ENCODE measurements at regions of chr1 and their contacts with region 1.

Region 1: DNA sequence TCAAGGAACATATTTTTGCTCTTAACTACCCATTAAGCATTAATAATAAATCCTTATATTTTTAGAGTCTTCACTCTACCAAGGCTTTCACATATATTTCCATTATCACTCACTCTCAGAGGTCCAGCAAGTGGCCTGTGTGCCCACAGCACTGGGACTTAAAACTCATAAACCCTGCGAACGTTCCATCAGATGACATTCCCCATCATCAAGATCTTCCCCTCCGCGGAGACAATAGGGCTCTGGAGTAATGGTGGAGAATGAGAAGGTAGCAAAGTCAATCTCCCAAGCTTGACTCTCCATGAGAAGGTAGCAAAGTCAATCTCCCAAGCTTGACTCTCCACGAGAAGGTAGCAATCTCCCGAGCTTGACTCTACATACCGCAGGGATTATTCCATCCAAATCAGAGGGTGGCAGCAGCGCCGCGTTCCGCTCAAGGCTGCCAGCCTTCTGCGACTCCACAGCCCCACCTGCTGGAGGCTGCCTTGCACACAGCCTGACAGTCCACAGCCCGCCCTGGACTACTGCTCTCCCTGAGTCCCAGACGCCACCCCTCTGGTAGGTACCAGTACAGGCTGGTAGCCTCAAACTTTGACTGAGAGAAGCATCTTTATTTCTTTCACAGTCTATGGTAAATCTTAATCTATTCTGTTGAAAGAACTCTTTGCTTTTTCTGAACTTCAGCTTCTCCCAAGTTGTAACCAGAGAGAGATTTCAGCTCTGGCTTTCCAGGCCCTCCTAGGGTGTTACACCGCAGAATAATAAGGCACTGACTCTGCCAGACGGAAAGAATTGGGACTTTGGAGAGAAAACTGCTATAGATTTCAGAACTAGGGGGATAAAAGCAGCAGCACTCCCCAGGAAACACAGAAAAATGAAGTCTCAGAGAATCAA is 26.4 kb upstream of the CTTNBP2NL start:
- DNase-seq: peak; percentile 83
- H3K4me3 ChIP-seq: peak overlapping the region in 1 of 2 experiments; percentile 42; a peak in 1 of 4 replicates
- H3K27ac ChIP-seq: no peak overlapping the region
- H3K4me1 ChIP-seq: no peaks in the 10 kb centered on the region; a peak in 1 of 4 replicates
- H3K27me3 ChIP-seq: peaks cover 33% of the 10 kb centered on the region
- CTCF ChIP-seq: peak; percentile 94
- EP300 ChIP-seq: no peak
- RAD21 ChIP-seq: peak; percentile 90

Region 2: DNA sequence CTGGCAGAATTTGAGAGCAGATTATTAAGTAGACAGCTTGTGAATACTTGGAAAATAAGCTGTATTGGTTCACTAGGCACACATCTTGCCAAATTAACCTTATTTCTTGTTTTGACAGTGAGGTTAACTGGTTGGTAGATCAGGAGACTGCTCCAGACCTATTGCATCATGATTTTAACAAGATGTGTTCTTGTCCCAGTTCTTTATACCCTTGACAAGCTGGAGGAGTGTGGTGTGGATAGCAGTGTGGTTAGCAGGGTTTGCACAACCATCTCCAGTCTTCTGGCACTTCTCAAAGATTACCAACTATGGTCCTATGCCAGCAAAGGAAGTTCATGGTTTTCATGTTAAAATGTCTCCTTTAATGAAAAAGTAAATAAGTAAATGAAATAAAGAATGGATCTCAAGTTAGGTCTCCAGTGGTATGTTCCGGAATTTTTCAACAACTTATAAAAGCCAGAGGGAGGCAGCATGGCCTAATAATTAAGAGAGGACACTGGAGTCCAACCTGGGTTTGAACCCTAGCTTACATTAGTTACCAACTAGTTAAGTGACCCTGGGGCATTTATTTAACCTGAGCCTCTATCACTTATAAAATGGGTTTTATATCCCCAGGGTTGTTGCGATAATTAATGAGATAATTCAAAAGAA is 579.8 kb before region 1 on chr1:
- CTCF ChIA-PET with region 1: interaction called, 12 read pairs
- POLR2A ChIA-PET with region 1: no interaction called
- DNase-seq: no peak
- H3K4me3 ChIP-seq: no peak overlapping the region
- H3K27ac ChIP-seq: no peak overlapping the region
- H3K4me1 ChIP-seq: no peaks in the 10 kb centered on the region
- H3K27me3 ChIP-seq: peaks cover 27% of the 10 kb centered on the region; the same call in 1 of the 2 replicates
- CTCF ChIP-seq: 0 out of 2 replicates have a peak, but pooled peaks have one; percentile 11
- EP300 ChIP-seq: no peak
- RAD21 ChIP-seq: peak; percentile 48

Region 3: DNA sequence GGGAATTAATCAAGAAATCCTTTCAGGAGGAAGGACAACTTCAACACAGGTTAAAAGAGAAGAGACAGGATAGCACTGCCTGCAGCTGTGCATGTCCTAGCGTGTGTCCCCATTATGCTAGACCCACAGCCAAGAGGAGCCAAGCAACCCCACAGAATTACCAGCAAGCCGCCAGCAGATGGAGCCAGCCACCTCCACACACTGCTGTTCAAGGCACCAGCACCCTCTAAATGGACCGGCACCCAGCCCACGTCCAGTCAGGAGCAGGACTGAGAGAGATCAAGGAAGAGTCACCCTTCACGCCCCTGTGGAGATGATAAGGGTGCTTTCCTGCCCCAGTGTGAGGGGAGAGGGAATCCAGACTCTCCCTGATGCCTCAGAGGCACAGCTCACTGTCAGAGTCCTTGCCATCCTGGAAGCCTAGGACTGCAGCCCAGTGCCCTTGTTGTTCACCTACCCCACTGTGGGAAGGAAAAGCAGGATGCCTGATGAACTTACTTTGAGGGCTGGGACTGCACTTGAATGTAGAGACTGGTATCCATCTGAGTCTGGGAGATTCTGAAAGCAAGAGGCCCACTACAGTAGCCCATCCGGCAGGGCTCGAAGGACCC is 10.7 kb before region 1 on chr1:
- CTCF ChIA-PET with region 1: interaction called, 110 read pairs
- POLR2A ChIA-PET with region 1: no interaction called
- DNase-seq: peak; percentile 56
- H3K4me3 ChIP-seq: peak overlapping the region in 1 of 2 experiments; percentile 27; a peak in 1 of 4 replicates
- H3K27ac ChIP-seq: no peak overlapping the region
- H3K4me1 ChIP-seq: no peaks in the 10 kb centered on the region
- H3K27me3 ChIP-seq: peaks cover 9% of the 10 kb centered on the region; the same call in 1 of the 2 replicates
- CTCF ChIP-seq: peak; percentile 73
- EP300 ChIP-seq: no peak
- RAD21 ChIP-seq: peak; percentile 65

Region 4: GRCh38 chr1:112383759-112384356 is 14.2 kb after region 1 on chr1:
- CTCF ChIA-PET with region 1: interaction called, 36 read pairs
- POLR2A ChIA-PET with region 1: no interaction called
- DNase-seq: no peak
- H3K4me3 ChIP-seq: no peak overlapping the region
- H3K27ac ChIP-seq: no peak overlapping the region
- H3K4me1 ChIP-seq: no peaks in the 10 kb centered on the region; a peak in 1 of 4 replicates
- H3K27me3 ChIP-seq: no peaks in the 10 kb centered on the region; the same call in 1 of the 2 replicates
- CTCF ChIP-seq: no peak
- EP300 ChIP-seq: no peak
- RAD21 ChIP-seq: no peak